Breast epithelium (tissue), 4 donors: ENCODE measurements at regions of chr15 and their contacts with region 1.

Region 1: GRCh38 chr15:70264014-70264582 is 166.4 kb upstream of the TLE3 start:
- DNase-seq: no peak
- H3K4me3 ChIP-seq: no peak overlapping the region
- H3K27ac ChIP-seq: peak overlapping the region in 1 of 2 donors; percentile 58
- H3K4me1 ChIP-seq: peaks cover 3 to 10% of the 10 kb centered on the region in 2 donors
- H3K27me3 ChIP-seq: no peaks in the 10 kb centered on the region
- CTCF ChIP-seq: no peak
- POLR2A ChIP-seq: no peak

Region 2: GRCh38 chr15:69784798-69785566 is 479.1 kb before region 1 on chr15:
- intact Hi-C with region 1: loop called (anchors 5 kb)
- DNase-seq: no peak
- H3K4me3 ChIP-seq: no peak overlapping the region
- H3K27ac ChIP-seq: no peak overlapping the region
- H3K4me1 ChIP-seq: no peaks in the 10 kb centered on the region
- H3K27me3 ChIP-seq: no peaks in the 10 kb centered on the region
- CTCF ChIP-seq: no peak
- POLR2A ChIP-seq: no peak

Region 3: GRCh38 chr15:70318594-70319465 is 54.7 kb after region 1 on chr15:
- intact Hi-C with region 1: no loop called
- DNase-seq: peak in 1 of 2 donors; percentile 18
- H3K4me3 ChIP-seq: no peak overlapping the region
- H3K27ac ChIP-seq: peak overlapping the region; percentile 11 to 67
- H3K4me1 ChIP-seq: peaks cover 11 to 13% of the 10 kb centered on the region in 2 donors
- H3K27me3 ChIP-seq: no peaks in the 10 kb centered on the region
- CTCF ChIP-seq: no peak
- POLR2A ChIP-seq: no peak

Region 4: GRCh38 chr15:71874245-71874644 is 1610.1 kb after region 1 on chr15:
- intact Hi-C with region 1: no loop called
- DNase-seq: no peak
- H3K4me3 ChIP-seq: no peak overlapping the region
- H3K27ac ChIP-seq: no peak overlapping the region
- H3K4me1 ChIP-seq: no peaks in the 10 kb centered on the region
- H3K27me3 ChIP-seq: no peaks in the 10 kb centered on the region
- CTCF ChIP-seq: no peak
- POLR2A ChIP-seq: no peak